ENCODE measurements at regions of chr1 and their contacts with region 1.

Region 1: DNA sequence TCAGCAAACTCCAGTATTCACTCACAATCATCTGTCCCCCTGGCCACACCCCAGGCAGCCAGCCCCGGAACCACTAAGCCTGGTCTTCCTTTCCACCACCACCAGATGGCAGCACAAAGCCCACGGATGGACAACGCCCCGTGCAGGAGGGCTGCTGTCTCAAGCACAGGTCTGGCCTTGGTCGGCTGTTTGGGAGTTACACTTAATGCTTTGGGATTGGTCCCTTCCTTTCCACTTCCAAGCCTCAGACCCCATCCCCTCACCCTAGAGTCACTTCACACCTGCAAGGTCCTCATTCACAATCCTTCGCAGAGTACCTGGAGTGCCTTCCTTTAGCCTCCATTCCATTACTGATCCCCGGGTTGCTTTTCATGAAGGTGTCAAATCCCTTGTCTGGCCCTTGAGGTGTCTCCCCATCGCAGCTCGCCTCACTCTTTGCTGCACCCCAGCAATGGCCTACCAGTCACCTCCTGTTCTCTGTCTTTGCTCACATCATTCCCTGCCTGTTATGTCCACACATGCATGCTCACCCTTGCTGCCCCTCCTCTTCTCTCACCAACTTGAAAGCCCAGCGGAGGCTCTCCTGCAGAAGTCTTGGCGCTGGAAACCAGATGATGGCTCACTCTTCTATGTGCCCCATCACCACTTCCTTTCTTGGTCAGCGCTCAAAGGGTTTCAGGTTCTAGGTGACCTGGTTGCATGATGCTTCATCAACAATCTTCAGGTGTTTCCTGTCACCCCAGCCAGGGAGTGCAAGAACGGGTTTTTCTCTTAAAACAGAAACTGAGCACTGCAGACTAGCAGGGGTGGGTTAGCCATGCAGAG is 24.9 kb upstream of the KCNA2 start:
- DNase-seq: peak; percentile 87 to 92 (median 88)
- H3K4me3 ChIP-seq: peak overlapping the region; percentile 25 to 46
- H3K4me3 Mint-ChIP-seq: no peak overlapping the region
- H3K27ac ChIP-seq: peak overlapping the region; percentile 72
- H3K27ac Mint-ChIP-seq: no peak overlapping the region
- H3K4me1 ChIP-seq: peaks cover 95% of the 10 kb centered on the region
- H3K4me1 Mint-ChIP-seq: peaks cover 32 to 57% (median 54%) of the 10 kb centered on the region in 4 donors
- H3K27me3 ChIP-seq: no peaks in the 10 kb centered on the region
- H3K27me3 Mint-ChIP-seq: no peaks in the 10 kb centered on the region

Region 2: GRCh38 chr1:110645821-110646735 is 15.0 kb after region 1 on chr1:
- CTCF ChIA-PET with region 1: interaction called, 75 read pairs
- POLR2A ChIA-PET with region 1: interaction called, 273 read pairs
- intact Hi-C with region 1: loop called (anchors 1 kb)
- DNase-seq: no peak
- H3K4me3 ChIP-seq: peak overlapping the region in 1 of 2 donors; percentile 2
- H3K4me3 Mint-ChIP-seq: peak overlapping the region in 5 of 8 donors; percentile 21 to 66 (median 44)
- H3K27ac ChIP-seq: peak overlapping the region; percentile 56
- H3K27ac Mint-ChIP-seq: peak overlapping the region in 6 of 7 donors; percentile 31 to 83 (median 62)
- H3K4me1 ChIP-seq: peaks cover 99% of the 10 kb centered on the region
- H3K4me1 Mint-ChIP-seq: peaks cover 11 to 51% (median 40%) of the 10 kb centered on the region in 4 donors
- H3K27me3 ChIP-seq: no peaks in the 10 kb centered on the region
- H3K27me3 Mint-ChIP-seq: no peaks in the 10 kb centered on the region

Region 3: DNA sequence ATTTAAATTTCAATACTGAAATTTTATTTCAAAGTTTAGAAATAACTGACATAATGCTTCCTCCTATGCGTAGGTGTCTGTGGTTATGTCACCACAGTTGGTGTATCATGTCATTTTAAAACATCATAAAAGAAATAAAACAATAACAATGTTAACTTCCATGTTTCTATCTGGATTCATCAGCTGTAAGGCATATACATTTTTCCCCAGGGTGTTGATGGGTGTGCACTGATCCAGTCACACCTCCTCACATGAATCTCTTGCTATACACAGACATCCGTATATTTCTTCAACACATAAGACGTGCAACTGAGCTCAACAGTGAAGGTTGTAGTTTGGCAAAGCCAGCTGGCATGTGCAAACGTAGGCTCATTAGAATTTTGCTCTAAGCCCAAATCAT is 37.5 kb after region 1 on chr1:
- CTCF ChIA-PET with region 1: interaction called, 179 read pairs
- POLR2A ChIA-PET with region 1: interaction called, 993 read pairs
- intact Hi-C with region 1: loop called (anchors 1 kb)
- DNase-seq: peak; percentile 36 to 54 (median 49)
- H3K4me3 ChIP-seq: peak overlapping the region; percentile 52 to 68
- H3K4me3 Mint-ChIP-seq: peak overlapping the region; percentile 68 to 89 (median 84)
- H3K27ac ChIP-seq: peak overlapping the region; percentile 91
- H3K27ac Mint-ChIP-seq: peak overlapping the region in 6 of 7 donors; percentile 77 to 94 (median 89)
- H3K4me1 ChIP-seq: peaks cover 76% of the 10 kb centered on the region
- H3K4me1 Mint-ChIP-seq: peaks cover 19 to 40% (median 23%) of the 10 kb centered on the region in 4 donors
- H3K27me3 ChIP-seq: no peaks in the 10 kb centered on the region
- H3K27me3 Mint-ChIP-seq: no peaks in the 10 kb centered on the region

Region 4: GRCh38 chr1:110686188-110686587 is 55.1 kb after region 1 on chr1:
- CTCF ChIA-PET with region 1: interaction called, 9 read pairs
- POLR2A ChIA-PET with region 1: interaction called, 10 read pairs
- intact Hi-C with region 1: loop called (anchors 1 kb)
- DNase-seq: peak in 4 of 5 donors; percentile 23 to 43 (median 34)
- H3K4me3 ChIP-seq: no peak overlapping the region
- H3K4me3 Mint-ChIP-seq: no peak overlapping the region
- H3K27ac ChIP-seq: no peak overlapping the region
- H3K27ac Mint-ChIP-seq: peak overlapping the region in 2 of 7 donors; percentile 19 to 56
- H3K4me1 ChIP-seq: no peaks in the 10 kb centered on the region
- H3K4me1 Mint-ChIP-seq: peaks cover 0 to 6% (median 5%) of the 10 kb centered on the region in 4 donors
- H3K27me3 ChIP-seq: no peaks in the 10 kb centered on the region
- H3K27me3 Mint-ChIP-seq: no peaks in the 10 kb centered on the region

Region 5: DNA sequence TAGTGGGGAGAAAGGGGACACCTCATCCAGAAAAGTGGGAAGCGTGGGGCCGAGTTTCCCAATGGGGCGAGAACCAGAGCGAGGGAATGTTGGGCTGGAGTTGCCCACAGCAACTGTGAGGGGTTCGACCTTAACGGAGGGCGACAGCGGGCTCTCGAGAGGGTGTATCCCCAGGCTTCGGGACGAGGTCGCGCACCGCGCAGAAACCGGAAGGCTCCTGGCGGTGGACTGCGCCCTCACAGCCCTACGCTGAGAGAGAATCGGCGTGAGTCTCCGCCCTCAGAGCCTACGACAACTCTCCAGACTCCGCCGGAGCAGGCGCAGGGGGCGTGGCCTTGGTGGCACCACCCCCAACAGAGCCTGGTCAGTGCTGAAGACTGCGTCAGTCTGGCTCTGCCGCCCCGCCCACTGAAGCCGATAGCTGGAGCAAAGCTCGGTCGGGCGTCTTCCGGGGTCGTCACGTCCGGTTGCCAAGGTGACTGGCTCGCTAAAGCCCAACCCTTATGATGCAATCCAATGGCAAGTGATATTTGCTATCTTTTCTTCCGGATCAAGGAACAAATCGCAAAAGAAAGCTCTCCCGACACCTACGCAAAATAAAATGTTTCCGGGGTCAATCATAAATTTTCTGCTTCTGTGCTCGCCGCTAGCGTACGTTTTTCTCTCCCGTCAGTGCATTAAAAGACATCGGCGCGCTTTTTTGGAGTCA is 332.8 kb after region 1 on chr1 and contains the start of gene LRIF1:
- CTCF ChIA-PET with region 1: no interaction called
- POLR2A ChIA-PET with region 1: interaction called, 4 read pairs
- intact Hi-C with region 1: loop called (anchors 10 kb)
- DNase-seq: peak; percentile 98 to 100 (median 100)
- H3K4me3 ChIP-seq: peak within 1 kb of the TSS; percentile 90 to 95
- H3K4me3 Mint-ChIP-seq: peak within 1 kb of the TSS; percentile 81 to 96 (median 92)
- H3K27ac ChIP-seq: peak within 1 kb of the TSS; percentile 96
- H3K27ac Mint-ChIP-seq: peak within 1 kb of the TSS; percentile 93 to 100 (median 98)
- H3K4me1 ChIP-seq: peaks cover 31% of the 10 kb centered on the region
- H3K4me1 Mint-ChIP-seq: peaks cover 20 to 35% (median 27%) of the 10 kb centered on the region in 4 donors
- H3K27me3 ChIP-seq: peaks cover 3% of the 10 kb centered on the region
- H3K27me3 Mint-ChIP-seq: peaks cover 8 to 10% of the 10 kb centered on the region in 2 donors
- total RNA-seq, gene LRIF1: 27.0 to 28.2 TPM

Measured in CD4-positive, alpha-beta memory T cell (primary cell).